ENCODE measurements at regions of chr9 and their contacts with region 1.

Region 1: GRCh38 chr9:92764988-92765936 is 629 bp upstream of the BICD2 start:
- DNase-seq: peak; percentile 98 to 99
- ATAC-seq: peak; percentile 95 to 98 (median 97)
- H3K4me3 ChIP-seq: peak overlapping the region; percentile 50 to 100 (median 82)
- H3K27ac ChIP-seq: peak overlapping the region; percentile 96 to 100 (median 98)
- H3K4me1 ChIP-seq: peaks cover 14 to 67% (median 54%) of the 10 kb centered on the region in 9 donors
- H3K27me3 ChIP-seq: no peaks in the 10 kb centered on the region
- CTCF ChIP-seq: peak; percentile 95 to 99 (median 97)

Region 2: DNA sequence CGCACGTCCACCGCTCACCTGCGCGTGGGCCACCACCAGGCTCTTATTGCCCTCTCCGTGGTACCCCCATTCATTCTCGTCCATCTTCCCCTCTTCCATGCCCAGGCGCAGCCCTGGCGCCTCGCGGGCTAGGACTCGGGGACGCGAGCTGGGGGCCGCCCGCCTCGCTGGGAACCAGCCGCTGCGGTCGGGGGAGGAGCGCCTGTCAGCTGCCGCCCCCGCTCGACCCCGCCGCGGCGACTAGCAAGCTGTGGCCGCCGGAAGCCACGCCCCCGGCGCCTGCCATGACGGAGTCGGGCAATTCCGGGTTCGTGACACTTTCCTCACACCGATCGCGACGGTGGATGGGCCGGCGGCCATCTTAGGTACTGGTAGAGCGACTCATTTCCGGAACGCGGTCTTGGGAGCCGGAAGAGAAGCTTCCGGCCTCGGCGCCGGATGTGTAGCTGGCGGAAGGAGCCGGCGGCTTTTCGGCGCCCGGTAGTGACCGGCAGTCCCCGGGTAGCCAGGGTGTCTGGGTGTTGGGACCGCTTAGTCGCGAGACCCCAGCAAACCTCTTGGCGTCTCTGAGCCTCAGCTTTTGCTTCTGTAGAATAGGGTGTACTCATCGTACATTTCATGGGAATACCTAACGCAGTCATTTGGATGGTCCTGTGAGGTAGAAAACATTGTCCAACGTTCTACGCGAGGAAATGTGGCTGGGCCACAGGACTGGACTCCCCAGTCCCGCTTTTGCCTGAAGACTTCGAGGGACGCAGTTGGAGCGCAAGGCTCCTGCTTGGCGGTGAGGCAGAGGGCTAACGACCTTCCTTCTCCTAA is 95.2 kb before region 1 on chr9 and contains the start of gene IPPK:
- intact Hi-C with region 1: loop called in 3 of 10 experiments (anchors 5 kb)
- DNase-seq: peak; percentile 98
- ATAC-seq: peak; percentile 94 to 98 (median 97)
- H3K4me3 ChIP-seq: peak within 1 kb of the TSS; percentile 66 to 98 (median 81)
- H3K27ac ChIP-seq: peak within 1 kb of the TSS; percentile 72 to 98 (median 92)
- H3K4me1 ChIP-seq: peaks cover 4 to 52% (median 40%) of the 10 kb centered on the region in 9 donors
- H3K27me3 ChIP-seq: no peaks in the 10 kb centered on the region
- CTCF ChIP-seq: no peak
- total RNA-seq, gene IPPK: 6.5 to 17.8 (median 8.5) TPM

Region 3: DNA sequence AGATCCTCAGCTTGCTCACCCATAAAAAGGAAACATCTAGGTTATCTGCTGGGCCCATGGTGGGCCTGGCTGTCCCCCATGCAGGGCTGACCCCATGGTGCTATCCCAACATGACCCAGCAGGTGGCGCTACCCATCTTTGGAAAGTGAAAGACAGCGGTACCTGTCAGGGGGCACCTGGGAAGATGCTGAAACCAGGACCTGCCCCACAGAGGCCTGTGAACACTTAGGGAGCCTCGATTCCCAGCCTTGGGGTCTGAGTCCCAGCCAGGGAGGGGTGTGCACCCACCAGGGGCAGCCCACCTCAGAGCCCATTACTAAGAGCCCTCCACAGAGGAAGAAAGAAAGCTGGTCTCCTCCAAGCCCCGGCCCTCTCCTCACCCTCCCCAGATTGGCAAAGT is 48.7 kb before region 1 on chr9:
- intact Hi-C with region 1: loop called in 4 of 10 experiments (anchors 1 to 5 kb)
- DNase-seq: peak; percentile 72 to 76
- ATAC-seq: peak; percentile 26 to 73 (median 54)
- H3K4me3 ChIP-seq: no peak overlapping the region
- H3K27ac ChIP-seq: peak overlapping the region in 7 of 10 donors; percentile 30 to 79 (median 57)
- H3K4me1 ChIP-seq: peaks cover 6 to 33% (median 22%) of the 10 kb centered on the region in 9 donors
- H3K27me3 ChIP-seq: no peaks in the 10 kb centered on the region
- CTCF ChIP-seq: peak; percentile 76 to 98 (median 94)

Region 4: DNA sequence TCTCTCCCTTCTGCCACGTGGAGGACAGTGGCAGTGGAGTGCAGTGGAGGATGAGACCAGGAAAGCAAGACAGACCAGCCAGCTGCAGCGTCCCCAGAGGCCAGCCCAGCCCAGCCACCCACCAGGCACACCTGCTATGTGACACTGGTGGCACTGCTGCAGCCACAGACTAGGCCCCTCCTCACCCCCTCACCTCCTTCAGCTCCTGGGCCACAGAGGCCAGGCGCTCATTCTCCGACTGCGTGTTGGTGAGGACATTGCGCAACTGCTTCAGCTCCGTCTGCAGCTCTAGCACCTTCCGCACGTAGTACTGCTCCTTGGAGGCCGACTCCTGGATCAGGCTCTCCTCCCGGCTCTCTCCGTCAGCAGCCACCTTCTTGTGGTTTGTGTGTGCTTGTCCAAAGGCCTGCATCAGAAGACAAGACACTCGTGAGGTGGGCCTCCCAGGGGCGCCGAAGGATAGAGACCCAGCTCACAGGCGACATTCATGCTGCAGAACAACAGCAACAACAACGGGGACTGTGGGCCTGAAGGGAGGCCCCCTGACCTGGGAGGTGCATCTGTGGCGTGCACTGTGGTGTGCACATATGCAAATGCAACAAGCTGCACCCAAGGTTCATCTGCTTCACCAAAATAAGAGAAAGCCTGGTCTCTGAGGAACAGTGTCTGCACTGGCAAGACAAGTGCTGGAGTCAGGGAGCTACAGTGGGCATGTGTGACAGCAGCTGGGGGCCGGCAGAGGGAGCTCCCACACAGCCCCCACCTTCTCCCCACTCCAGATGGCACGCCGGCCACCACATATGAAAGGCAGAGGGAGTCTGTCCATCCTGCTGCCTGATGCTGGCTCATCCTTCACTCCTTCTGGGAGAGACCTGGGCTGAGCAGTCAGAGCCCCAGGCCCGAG is 36.2 kb before region 1 on chr9:
- intact Hi-C with region 1: loop called in 7 of 10 experiments (anchors 5 kb)
- DNase-seq: no peak
- ATAC-seq: peak in 6 of 8 donors; percentile 41 to 61 (median 54)
- H3K4me3 ChIP-seq: no peak overlapping the region
- H3K27ac ChIP-seq: no peak overlapping the region
- H3K4me1 ChIP-seq: peaks cover 7 to 61% (median 36%) of the 10 kb centered on the region in 9 donors
- H3K27me3 ChIP-seq: no peaks in the 10 kb centered on the region
- CTCF ChIP-seq: peak in 7 of 9 donors; percentile 41 to 71 (median 53)

Measured in heart right ventricle (tissue), 16 donors.